ENCODE measurements at regions of chr11 and their contacts with region 1.

Region 1: GRCh38 chr11:64652586-64653387 is 61.8 kb downstream of the SLC22A12 start:
- DNase-seq: peak; percentile 41
- H3K4me3 ChIP-seq: no peak overlapping the region
- H3K27ac ChIP-seq: no peak overlapping the region
- H3K4me1 ChIP-seq: no peaks in the 10 kb centered on the region
- H3K27me3 ChIP-seq: no peaks in the 10 kb centered on the region
- CTCF ChIP-seq: peak; percentile 91 to 93

Region 2: DNA sequence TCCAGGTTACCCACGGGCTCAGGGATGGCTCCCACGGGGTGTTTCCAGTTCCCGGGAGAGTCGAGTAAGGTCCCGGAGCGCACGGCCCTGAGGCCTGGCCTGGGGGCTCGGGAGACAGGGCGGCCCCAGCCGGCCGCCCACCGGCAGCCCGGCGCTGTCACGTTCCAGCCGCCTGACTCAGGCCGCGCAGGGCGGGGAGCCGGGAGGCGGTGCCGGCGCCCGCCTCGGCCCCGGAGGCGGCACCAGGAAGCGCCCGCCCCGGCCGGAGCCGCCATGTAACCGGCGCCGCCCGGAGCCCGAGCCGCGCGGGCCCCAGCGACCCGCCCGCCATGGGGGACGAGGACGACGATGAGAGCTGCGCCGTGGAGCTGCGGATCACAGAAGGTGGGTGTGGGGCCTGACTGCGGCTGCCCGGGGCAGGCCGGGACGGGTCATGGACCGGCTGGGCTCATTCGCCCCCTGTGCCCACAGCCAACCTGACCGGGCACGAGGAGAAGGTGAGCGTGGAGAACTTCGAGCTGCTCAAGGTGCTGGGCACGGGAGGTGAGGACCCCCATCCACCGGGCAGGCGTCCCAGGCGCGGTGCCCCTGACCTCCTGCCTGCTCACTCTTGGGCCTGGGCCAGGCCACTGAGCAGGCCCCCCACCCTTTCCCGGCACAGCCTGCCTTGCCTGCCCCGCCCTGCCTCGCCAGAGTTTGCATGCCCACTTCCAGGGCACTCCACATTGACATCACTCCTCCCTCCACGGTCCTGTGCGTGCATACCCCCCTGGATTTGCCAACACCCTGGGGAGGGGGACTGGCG is 293.7 kb before region 1 on chr11 and contains the start of gene RPS6KA4:
- CTCF ChIA-PET with region 1: interaction called, 6 read pairs
- dilution Hi-C with region 1: no loop called
- in situ Hi-C with region 1: no loop called
- intact Hi-C with region 1: loop called (anchors 2 kb)
- DNase-seq: peak; percentile 71
- H3K4me3 ChIP-seq: peak within 1 kb of the TSS; percentile 61 to 97 (median 93)
- H3K27ac ChIP-seq: peak within 1 kb of the TSS; percentile 55
- H3K4me1 ChIP-seq: peaks cover 47% of the 10 kb centered on the region
- H3K27me3 ChIP-seq: no peaks in the 10 kb centered on the region
- CTCF ChIP-seq: no peak
- total RNA-seq, gene RPS6KA4: 45.0 to 92.1 TPM

Region 3: DNA sequence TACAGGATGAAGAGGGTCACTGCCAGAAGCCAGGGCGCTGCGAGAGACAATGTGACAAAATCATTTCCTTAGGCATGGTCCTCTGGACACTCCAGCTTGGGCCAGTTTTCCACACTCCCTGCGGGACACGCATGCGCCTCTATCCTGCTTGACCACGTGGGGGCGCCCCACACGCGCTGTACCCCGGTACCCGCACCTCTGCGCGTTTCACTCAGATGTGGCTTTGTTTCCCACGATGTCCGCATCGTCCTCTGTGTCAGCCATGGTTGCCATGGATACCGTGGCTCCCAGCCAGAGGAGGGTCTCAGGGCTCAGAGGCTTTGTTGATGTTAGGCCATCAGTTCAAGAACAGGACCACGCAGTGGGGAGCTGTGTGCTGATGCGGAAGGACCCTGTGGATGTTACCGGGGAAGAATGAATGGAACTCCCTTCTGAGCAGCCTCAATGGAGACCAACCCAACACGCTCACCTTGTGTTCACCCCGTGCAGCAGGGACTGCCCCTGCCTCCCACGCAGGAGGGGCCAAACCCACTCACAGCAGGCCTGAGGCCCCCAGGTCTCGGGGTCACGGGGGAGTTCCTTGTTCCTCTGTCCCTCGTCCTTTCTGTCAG is 162.9 kb before region 1 on chr11:
- CTCF ChIA-PET with region 1: interaction called, 4 read pairs
- dilution Hi-C with region 1: no loop called
- in situ Hi-C with region 1: loop called in 1 of 2 experiments (anchors 10 kb)
- intact Hi-C with region 1: loop called (anchors 1 kb)
- DNase-seq: peak; percentile 27
- H3K4me3 ChIP-seq: no peak overlapping the region
- H3K27ac ChIP-seq: no peak overlapping the region
- H3K4me1 ChIP-seq: no peaks in the 10 kb centered on the region
- H3K27me3 ChIP-seq: peaks cover 2% of the 10 kb centered on the region
- CTCF ChIP-seq: peak; percentile 69 to 95

Region 4: GRCh38 chr11:64571410-64572091 is 81.2 kb before region 1 on chr11:
- CTCF ChIA-PET with region 1: no interaction called
- dilution Hi-C with region 1: no loop called
- in situ Hi-C with region 1: no loop called
- intact Hi-C with region 1: loop called (anchors 5 kb)
- DNase-seq: peak; percentile 93
- H3K4me3 ChIP-seq: no peak overlapping the region
- H3K27ac ChIP-seq: peak overlapping the region; percentile 24
- H3K4me1 ChIP-seq: peaks cover 13% of the 10 kb centered on the region
- H3K27me3 ChIP-seq: no peaks in the 10 kb centered on the region
- CTCF ChIP-seq: no peak

Region 5: GRCh38 chr11:64713031-64713780 is 60.4 kb after region 1 on chr11:
- CTCF ChIA-PET with region 1: no interaction called
- dilution Hi-C with region 1: loop called (anchors 5 kb)
- in situ Hi-C with region 1: no loop called
- intact Hi-C with region 1: no loop called
- DNase-seq: peak; percentile 39
- H3K4me3 ChIP-seq: no peak overlapping the region
- H3K27ac ChIP-seq: no peak overlapping the region
- H3K4me1 ChIP-seq: no peaks in the 10 kb centered on the region
- H3K27me3 ChIP-seq: peaks cover 21% of the 10 kb centered on the region
- CTCF ChIP-seq: no peak

Region 6: GRCh38 chr11:64750361-64751054 is 97.7 kb after region 1 on chr11:
- CTCF ChIA-PET with region 1: interaction called, 3 read pairs
- dilution Hi-C with region 1: loop called (anchors 5 kb)
- in situ Hi-C with region 1: no loop called
- intact Hi-C with region 1: no loop called
- DNase-seq: no peak
- H3K4me3 ChIP-seq: no peak overlapping the region
- H3K27ac ChIP-seq: no peak overlapping the region
- H3K4me1 ChIP-seq: peaks cover 9% of the 10 kb centered on the region
- H3K27me3 ChIP-seq: no peaks in the 10 kb centered on the region
- CTCF ChIP-seq: no peak

Measured in mammary epithelial cell (primary cell).